Activated CD8-positive, alpha-beta T cell treated with anti-CD3 and anti-CD28 coated beads for 36 hours (primary cell): ENCODE measurements at regions of chr1 and their contacts with region 1.

Region 1: GRCh38 chr1:32538887-32539583 is at the start of gene ZBTB8A:
- DNase-seq: peak; percentile 30
- ATAC-seq: peak; percentile 37
- H3K4me3 Mint-ChIP-seq: peak within 1 kb of the TSS; percentile 75
- H3K27ac Mint-ChIP-seq: no peak within 1 kb of the TSS
- H3K4me1 Mint-ChIP-seq: peaks cover 8% of the 10 kb centered on the region
- H3K27me3 Mint-ChIP-seq: peaks cover 62% of the 10 kb centered on the region
- CTCF ChIP-seq: no peak
- total RNA-seq, gene ZBTB8A: 0.16 TPM in 1 of 2 experiments, not detected in the other

Region 2: GRCh38 chr1:32521165-32521564 is 17.9 kb before region 1 on chr1:
- CTCF ChIA-PET with region 1: interaction called, 15 read pairs
- POLR2A ChIA-PET with region 1: interaction called, 7 read pairs
- intact Hi-C with region 1: no loop called
- DNase-seq: no peak
- ATAC-seq: no peak
- H3K4me3 Mint-ChIP-seq: peak overlapping the region; percentile 67
- H3K27ac Mint-ChIP-seq: no peak overlapping the region
- H3K4me1 Mint-ChIP-seq: peaks cover 2% of the 10 kb centered on the region
- H3K27me3 Mint-ChIP-seq: peaks cover 5% of the 10 kb centered on the region
- CTCF ChIP-seq: no peak

Region 3: GRCh38 chr1:32580348-32581017 is 41.4 kb after region 1 on chr1:
- CTCF ChIA-PET with region 1: no interaction called
- POLR2A ChIA-PET with region 1: no interaction called
- intact Hi-C with region 1: no loop called
- DNase-seq: no peak
- ATAC-seq: peak; percentile 51
- H3K4me3 Mint-ChIP-seq: no peak overlapping the region
- H3K27ac Mint-ChIP-seq: no peak overlapping the region
- H3K4me1 Mint-ChIP-seq: no peaks in the 10 kb centered on the region
- H3K27me3 Mint-ChIP-seq: peaks cover 1% of the 10 kb centered on the region
- CTCF ChIP-seq: no peak